ENCODE measurements at regions of chr10 and their contacts with region 1.

Region 1: GRCh38 chr10:91908337-91909116 is 759 bp downstream of the FGFBP3 start:
- DNase-seq: peak; percentile 91
- H3K4me3 ChIP-seq: peak overlapping the region; percentile 84
- H3K27ac ChIP-seq: peak overlapping the region; percentile 52
- H3K4me1 ChIP-seq: peaks cover 19% of the 10 kb centered on the region
- CTCF ChIP-seq: peak; percentile 75

Region 2: GRCh38 chr10:91298224-91298871 is 610.2 kb before region 1 on chr10:
- CTCF ChIA-PET with region 1: no interaction called
- POLR2A ChIA-PET with region 1: no interaction called
- intact Hi-C with region 1: loop called (anchors 2 kb)
- DNase-seq: peak; percentile 78
- H3K4me3 ChIP-seq: no peak overlapping the region
- H3K27ac ChIP-seq: no peak overlapping the region
- H3K4me1 ChIP-seq: no peaks in the 10 kb centered on the region
- CTCF ChIP-seq: peak; percentile 90

Region 3: DNA sequence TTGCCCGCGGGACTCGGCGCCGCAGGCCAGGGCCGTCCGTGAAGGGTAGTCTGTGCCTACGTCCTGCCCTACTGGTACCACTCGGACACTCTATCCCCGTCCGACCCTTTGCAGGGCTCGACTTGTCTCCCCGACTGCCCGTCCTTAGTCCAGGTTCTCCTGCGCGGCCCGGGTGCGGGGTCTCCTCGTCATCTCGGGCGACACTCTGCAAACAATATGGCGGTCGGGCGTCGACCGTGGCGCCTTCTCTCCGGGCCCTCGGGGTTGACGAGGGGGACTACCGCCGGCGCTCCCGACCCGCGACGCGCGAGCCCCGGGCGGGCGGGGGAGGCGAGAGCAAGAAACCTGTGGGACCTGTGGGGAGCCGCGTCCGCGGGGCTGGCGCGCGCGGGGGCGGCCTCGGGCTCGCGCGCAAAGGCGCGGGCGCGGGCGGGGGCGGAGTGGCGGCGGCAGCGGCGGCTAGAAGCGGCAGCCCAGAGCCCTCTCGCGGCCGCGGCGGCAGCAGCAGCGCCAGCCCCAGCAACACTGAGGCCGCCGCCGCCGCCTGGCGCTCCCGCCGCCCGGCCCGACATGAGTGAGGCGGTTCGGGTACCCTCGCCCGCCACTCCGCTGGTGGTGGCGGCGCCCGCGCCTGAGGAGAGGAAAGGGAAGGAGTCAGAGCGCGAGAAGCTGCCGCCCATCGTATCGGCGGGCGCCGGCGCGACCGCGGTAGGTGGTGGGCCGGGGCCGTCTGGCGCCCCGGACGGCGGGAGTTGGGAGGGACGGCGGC is 498.5 kb before region 1 on chr10 and contains the start of gene HECTD2:
- CTCF ChIA-PET with region 1: no interaction called
- POLR2A ChIA-PET with region 1: no interaction called
- intact Hi-C with region 1: loop called (anchors 5 kb)
- DNase-seq: peak; percentile 81
- H3K4me3 ChIP-seq: peak within 1 kb of the TSS; percentile 71
- H3K27ac ChIP-seq: no peak within 1 kb of the TSS
- H3K4me1 ChIP-seq: peaks cover 9% of the 10 kb centered on the region
- CTCF ChIP-seq: peak; percentile 44; the same call in 1 of the 2 replicates
- total RNA-seq, gene HECTD2: 0.16 TPM in 1 of 2 replicates, not detected in the other

Region 4: GRCh38 chr10:91797874-91798648 is 110.5 kb before region 1 on chr10 and contains the start of gene TNKS2:
- CTCF ChIA-PET with region 1: no interaction called
- POLR2A ChIA-PET with region 1: interaction called, 7 read pairs
- intact Hi-C with region 1: loop called (anchors 1 kb)
- DNase-seq: peak; percentile 96
- H3K4me3 ChIP-seq: peak within 1 kb of the TSS; percentile 85
- H3K27ac ChIP-seq: peak within 1 kb of the TSS; percentile 84
- H3K4me1 ChIP-seq: peaks cover 33% of the 10 kb centered on the region
- CTCF ChIP-seq: no peak
- total RNA-seq, gene TNKS2: 18.0 and 20.0 TPM in 2 replicates

Measured in OCI-LY7 (cell line).